ENCODE measurements at regions of chr3 and their contacts with region 1.

Region 1: DNA sequence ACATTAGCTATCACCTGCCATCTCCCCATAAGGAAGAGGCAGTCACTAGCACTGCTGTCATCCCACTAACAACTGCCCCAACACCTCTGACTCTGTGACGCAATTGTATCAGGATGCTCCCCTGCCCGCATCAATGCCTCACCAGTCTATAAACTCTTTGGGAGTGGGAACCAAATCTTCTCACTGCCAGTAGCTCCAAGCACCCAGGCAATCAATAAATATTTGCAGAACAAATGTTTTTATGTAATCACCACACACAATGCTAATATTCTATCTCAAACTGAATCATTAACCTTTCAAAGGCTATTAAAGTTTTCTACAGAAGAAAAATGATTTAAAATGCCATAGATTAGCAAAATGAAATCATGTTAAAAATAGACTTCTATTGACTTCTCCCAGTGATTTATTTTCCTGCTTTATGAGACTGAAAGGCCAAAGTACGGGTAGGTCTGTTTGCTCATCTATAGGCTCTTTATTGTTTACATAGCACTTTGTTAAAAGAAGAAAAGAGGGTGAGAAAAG is 131.3 kb downstream of the PLD1 start:
- DNase-seq: peak; percentile 40 to 72
- H3K4me3 ChIP-seq: no peak overlapping the region
- H3K4me3 Mint-ChIP-seq: no peak overlapping the region
- H3K27ac Mint-ChIP-seq: no peak overlapping the region
- H3K4me1 ChIP-seq: peaks cover 35% of the 10 kb centered on the region
- H3K4me1 Mint-ChIP-seq: peaks cover 26% of the 10 kb centered on the region
- H3K27me3 ChIP-seq: no peaks in the 10 kb centered on the region
- H3K27me3 Mint-ChIP-seq: no peaks in the 10 kb centered on the region
- CTCF ChIP-seq: no peak

Region 2: GRCh38 chr3:171646357-171647133 is 32.5 kb before region 1 on chr3:
- CTCF ChIA-PET with region 1: no interaction called
- POLR2A ChIA-PET with region 1: no interaction called
- intact Hi-C with region 1: no loop called
- DNase-seq: peak in 1 of 2 experiments; percentile 21
- H3K4me3 ChIP-seq: no peak overlapping the region
- H3K4me3 Mint-ChIP-seq: no peak overlapping the region
- H3K27ac Mint-ChIP-seq: no peak overlapping the region
- H3K4me1 ChIP-seq: no peaks in the 10 kb centered on the region
- H3K4me1 Mint-ChIP-seq: no peaks in the 10 kb centered on the region
- H3K27me3 ChIP-seq: no peaks in the 10 kb centered on the region
- H3K27me3 Mint-ChIP-seq: no peaks in the 10 kb centered on the region
- CTCF ChIP-seq: peak; percentile 55 to 66

Region 3: GRCh38 chr3:171809821-171810628 is 131.0 kb after region 1 on chr3 and contains the start of gene PLD1:
- CTCF ChIA-PET with region 1: no interaction called
- POLR2A ChIA-PET with region 1: interaction called, 3 read pairs
- intact Hi-C with region 1: loop called (anchors 1 kb)
- DNase-seq: peak; percentile 87 to 88
- H3K4me3 ChIP-seq: peak within 1 kb of the TSS; percentile 90
- H3K4me3 Mint-ChIP-seq: peak within 1 kb of the TSS; percentile 87
- H3K27ac Mint-ChIP-seq: peak within 1 kb of the TSS; percentile 83
- H3K4me1 ChIP-seq: peaks cover 37% of the 10 kb centered on the region
- H3K4me1 Mint-ChIP-seq: peaks cover 28% of the 10 kb centered on the region
- H3K27me3 ChIP-seq: no peaks in the 10 kb centered on the region
- H3K27me3 Mint-ChIP-seq: no peaks in the 10 kb centered on the region
- CTCF ChIP-seq: no peak
- total RNA-seq, gene PLD1: 5.3 and 5.5 TPM in 2 replicates